Pancreas (tissue), 10 donors: ENCODE measurements at regions of chr1 and their contacts with region 1.

Region 1: DNA sequence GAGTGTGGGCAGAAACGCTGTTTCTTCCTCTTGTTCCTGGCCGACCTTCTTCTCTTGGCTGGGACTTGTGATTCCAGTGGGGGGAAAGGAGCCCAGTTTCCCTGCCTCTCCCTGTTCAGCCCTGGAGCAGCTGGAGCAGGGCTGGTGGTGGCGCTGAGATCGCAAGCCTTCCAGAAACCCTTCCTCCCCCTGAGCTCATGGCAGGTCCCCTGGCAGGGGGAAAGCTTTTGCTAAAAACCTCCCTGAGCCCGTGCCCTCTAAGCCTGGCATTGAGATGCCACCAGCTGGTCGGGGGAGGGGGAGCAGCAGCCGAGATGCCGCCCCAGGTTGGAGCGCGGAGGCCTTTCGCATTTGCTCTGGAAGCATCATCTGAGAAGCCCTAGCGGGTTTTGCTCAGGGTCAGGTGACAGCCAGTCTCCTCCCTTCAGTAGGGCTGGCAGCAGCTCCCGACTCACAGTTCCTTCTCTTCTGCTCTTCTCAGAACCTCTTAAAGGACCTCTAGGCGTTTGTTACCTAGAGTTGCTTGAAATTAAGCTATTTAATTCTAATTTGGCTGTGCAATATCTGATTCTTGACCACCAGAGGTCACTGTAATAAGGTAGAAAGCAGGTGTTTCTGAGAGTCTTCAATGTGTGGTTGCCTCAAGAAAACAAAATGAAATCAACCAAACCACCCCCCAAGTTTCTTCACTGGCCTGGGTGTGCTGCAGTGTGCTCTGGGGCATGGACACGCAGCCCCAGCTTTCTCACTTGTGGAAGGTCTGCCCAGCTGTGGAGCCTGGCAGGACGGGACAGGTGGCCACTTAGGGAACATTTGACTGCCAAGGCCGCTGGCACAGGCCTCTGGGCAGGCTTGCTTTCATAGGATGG is 257.3 kb downstream of the CAMTA1 start:
- DNase-seq: no peak
- ATAC-seq: peak in 3 of 4 donors; percentile 70 to 77 (median 71)
- H3K4me3 ChIP-seq: no peak overlapping the region
- H3K27ac ChIP-seq: no peak overlapping the region
- H3K4me1 ChIP-seq: no peaks in the 10 kb centered on the region
- H3K27me3 ChIP-seq: no peaks in the 10 kb centered on the region
- CTCF ChIP-seq: peak; percentile 36 to 45 (median 39)

Region 2: GRCh38 chr1:7224644-7225043 is 182.1 kb after region 1 on chr1:
- intact Hi-C with region 1: loop called in 1 of 3 experiments (anchors 10 kb)
- DNase-seq: peak in 1 of 6 donors; percentile 25
- ATAC-seq: peak in 1 of 4 donors; percentile 20
- H3K4me3 ChIP-seq: no peak overlapping the region
- H3K27ac ChIP-seq: no peak overlapping the region
- H3K4me1 ChIP-seq: no peaks in the 10 kb centered on the region
- H3K27me3 ChIP-seq: no peaks in the 10 kb centered on the region
- CTCF ChIP-seq: no peak